A549 (cell line): ENCODE measurements at regions of chr1 and their contacts with region 1.

Region 1: GRCh38 chr1:181142096-181142958 is 53.8 kb downstream of the IER5 start:
- DNase-seq: peak; percentile 81 to 92
- ATAC-seq: peak; percentile 89 to 96
- H3K4me3 ChIP-seq: peak overlapping the region; percentile 19
- H3K27ac ChIP-seq: peak overlapping the region; percentile 77 to 92
- H3K4me1 ChIP-seq: peaks cover 36% of the 10 kb centered on the region
- CTCF ChIP-seq: peak; percentile 96
- EP300 ChIP-seq: no peak
- POLR2A ChIP-seq: no peak
- RAD21 ChIP-seq: peak; percentile 100

Region 2: GRCh38 chr1:180515864-180516388 is 626.4 kb before region 1 on chr1:
- CTCF ChIA-PET with region 1: interaction called, 16 read pairs
- POLR2A ChIA-PET with region 1: no interaction called
- DNase-seq: peak; percentile 84
- ATAC-seq: peak; percentile 97 to 100
- H3K4me3 ChIP-seq: no peak overlapping the region
- H3K27ac ChIP-seq: peak overlapping the region; percentile 74 to 75
- H3K4me1 ChIP-seq: peaks cover 12% of the 10 kb centered on the region
- CTCF ChIP-seq: peak; percentile 95
- EP300 ChIP-seq: no peak
- POLR2A ChIP-seq: no peak
- RAD21 ChIP-seq: peak; percentile 97 to 98

Region 3: DNA sequence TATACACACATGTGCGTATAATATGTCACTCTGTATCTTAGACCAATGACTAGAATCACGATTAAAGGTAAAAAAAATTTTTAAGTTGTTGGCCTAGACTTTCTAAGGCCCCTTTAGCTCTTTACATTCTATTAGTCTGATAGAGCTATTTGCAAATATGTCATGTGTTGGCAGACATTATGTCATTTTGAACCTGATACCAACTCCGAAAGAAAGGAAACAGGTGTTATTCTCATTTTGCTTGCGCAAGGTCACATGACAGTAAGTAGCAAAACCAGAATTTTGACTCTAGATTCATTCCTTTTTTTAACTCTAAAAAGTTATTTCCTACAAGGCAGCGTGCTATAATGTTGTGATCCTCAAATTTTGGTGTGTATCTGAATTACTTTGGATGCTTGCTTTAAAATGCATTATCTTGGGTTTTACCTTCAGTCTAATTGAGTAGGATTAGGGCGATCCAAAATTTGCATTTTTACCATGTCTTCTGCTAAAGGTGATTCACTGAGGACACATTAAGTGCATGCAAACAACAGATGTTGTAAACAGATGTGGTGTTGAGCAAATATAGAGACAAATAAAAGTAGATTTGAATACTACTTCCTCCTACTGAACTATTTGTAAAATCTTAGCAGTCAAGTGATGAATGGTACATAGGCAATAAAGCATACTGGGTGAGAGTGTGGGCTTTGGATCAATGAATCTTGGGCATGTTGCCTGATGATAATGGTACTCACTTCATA is 293.1 kb before region 1 on chr1:
- CTCF ChIA-PET with region 1: no interaction called
- POLR2A ChIA-PET with region 1: no interaction called
- DNase-seq: no peak
- ATAC-seq: no peak
- H3K4me3 ChIP-seq: no peak overlapping the region
- H3K27ac ChIP-seq: no peak overlapping the region
- H3K4me1 ChIP-seq: no peaks in the 10 kb centered on the region
- CTCF ChIP-seq: no peak
- EP300 ChIP-seq: no peak
- POLR2A ChIP-seq: no peak
- RAD21 ChIP-seq: no peak

Region 4: DNA sequence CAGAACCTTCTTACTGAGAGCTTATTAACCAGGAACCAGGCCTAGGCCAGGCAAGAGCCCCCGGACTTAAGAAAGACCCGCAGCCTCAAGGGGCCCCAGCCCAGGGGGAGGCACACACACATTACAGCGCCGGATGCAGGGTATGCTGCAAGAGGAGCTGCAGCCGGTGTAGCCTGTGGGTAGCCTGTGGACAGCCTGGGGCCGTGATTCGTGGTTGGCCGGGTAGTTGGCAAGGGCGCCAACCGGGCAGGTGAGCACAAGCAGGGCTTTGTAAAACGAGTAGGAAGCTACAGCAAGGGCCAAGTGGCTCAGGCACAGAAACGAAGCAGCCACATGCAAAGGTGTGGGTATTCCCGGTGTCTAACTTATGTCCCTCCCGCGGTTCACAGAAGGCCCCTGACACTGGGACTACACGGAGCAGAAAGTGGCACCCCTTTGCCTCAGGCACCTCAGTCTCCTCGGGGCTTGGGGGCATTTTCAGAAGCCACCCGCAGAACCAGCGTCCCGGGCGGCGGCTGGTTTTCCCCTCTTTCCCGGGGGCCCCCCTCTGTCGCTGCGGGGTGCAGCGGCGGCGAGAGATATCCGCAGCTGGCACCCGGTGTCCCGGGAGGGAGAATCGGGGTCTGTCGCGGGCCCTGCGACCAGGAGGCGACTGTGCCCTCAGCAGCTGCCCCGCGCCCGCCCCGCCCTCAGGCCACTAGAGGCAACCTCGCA is 188.9 kb before region 1 on chr1:
- CTCF ChIA-PET with region 1: interaction called, 17 read pairs
- POLR2A ChIA-PET with region 1: no interaction called
- DNase-seq: peak in 1 of 2 experiments; percentile 15
- ATAC-seq: peak; percentile 2 to 8; a peak in 5 of 6 replicates
- H3K4me3 ChIP-seq: peak overlapping the region; percentile 67
- H3K27ac ChIP-seq: peak overlapping the region; percentile 87 to 96
- H3K4me1 ChIP-seq: peaks cover 8% of the 10 kb centered on the region; the same call in 2 of the 3 replicates
- CTCF ChIP-seq: no peak
- EP300 ChIP-seq: no peak
- POLR2A ChIP-seq: no peak
- RAD21 ChIP-seq: no peak

Region 5: DNA sequence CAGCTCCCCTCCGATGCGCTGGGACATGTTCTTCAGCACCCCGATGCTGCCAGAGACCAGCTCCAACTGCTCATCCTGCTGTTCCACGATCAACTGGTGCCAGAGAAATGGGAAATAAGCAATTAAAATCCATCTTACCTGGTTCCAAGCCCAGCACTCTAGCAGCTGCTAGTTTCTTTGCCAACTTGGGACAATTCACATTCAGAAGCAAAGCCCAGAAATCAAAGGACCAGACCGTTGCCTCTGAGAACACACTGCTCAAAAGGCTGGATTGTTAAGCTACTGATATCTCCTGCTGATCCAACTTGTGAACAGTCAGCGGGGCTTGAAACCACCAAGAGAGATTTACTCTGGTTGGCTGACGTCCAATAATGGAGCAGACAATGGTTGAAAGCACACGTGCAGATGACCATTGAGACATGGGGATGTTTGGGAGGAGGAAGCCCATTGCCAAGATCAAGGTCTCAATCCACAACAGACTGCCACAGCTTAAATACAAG is 154.0 kb before region 1 on chr1:
- CTCF ChIA-PET with region 1: interaction called, 18 read pairs
- POLR2A ChIA-PET with region 1: no interaction called
- DNase-seq: no peak
- ATAC-seq: no peak
- H3K4me3 ChIP-seq: no peak overlapping the region
- H3K27ac ChIP-seq: no peak overlapping the region
- H3K4me1 ChIP-seq: no peaks in the 10 kb centered on the region
- CTCF ChIP-seq: no peak
- EP300 ChIP-seq: no peak
- POLR2A ChIP-seq: no peak
- RAD21 ChIP-seq: no peak

Region 6: DNA sequence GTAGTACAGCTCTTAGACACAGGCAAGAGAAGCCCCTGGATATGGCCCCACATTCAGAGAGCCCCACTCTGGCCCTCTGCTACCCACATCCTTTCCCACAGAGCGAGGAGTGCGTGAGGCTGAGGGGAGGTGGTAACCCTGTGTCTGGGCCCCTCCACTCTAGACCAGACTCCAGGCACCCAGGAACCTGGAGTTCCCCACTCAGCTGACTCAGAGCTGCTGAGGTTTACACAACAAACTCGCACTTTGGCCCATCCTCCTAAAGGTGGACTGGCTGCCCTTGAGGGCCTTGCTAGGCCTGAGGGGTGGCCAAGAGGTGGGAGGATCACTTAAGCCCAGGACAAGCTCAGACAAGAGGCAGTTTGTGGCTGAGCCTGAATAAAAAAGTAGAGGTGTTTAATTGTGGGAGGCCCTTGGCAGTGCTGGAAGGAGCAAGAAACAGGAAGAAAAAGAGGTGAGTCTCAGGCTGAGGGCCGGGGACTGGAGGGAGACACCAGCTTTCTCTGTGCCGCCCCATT is 97.8 kb before region 1 on chr1:
- CTCF ChIA-PET with region 1: interaction called, 55 read pairs
- POLR2A ChIA-PET with region 1: interaction called, 3 read pairs
- DNase-seq: peak; percentile 59 to 66
- ATAC-seq: peak; percentile 91 to 92
- H3K4me3 ChIP-seq: no peak overlapping the region
- H3K27ac ChIP-seq: peak overlapping the region; percentile 48 to 79
- H3K4me1 ChIP-seq: peaks cover 28% of the 10 kb centered on the region
- CTCF ChIP-seq: no peak
- EP300 ChIP-seq: no peak
- POLR2A ChIP-seq: no peak
- RAD21 ChIP-seq: no peak

Region 7: DNA sequence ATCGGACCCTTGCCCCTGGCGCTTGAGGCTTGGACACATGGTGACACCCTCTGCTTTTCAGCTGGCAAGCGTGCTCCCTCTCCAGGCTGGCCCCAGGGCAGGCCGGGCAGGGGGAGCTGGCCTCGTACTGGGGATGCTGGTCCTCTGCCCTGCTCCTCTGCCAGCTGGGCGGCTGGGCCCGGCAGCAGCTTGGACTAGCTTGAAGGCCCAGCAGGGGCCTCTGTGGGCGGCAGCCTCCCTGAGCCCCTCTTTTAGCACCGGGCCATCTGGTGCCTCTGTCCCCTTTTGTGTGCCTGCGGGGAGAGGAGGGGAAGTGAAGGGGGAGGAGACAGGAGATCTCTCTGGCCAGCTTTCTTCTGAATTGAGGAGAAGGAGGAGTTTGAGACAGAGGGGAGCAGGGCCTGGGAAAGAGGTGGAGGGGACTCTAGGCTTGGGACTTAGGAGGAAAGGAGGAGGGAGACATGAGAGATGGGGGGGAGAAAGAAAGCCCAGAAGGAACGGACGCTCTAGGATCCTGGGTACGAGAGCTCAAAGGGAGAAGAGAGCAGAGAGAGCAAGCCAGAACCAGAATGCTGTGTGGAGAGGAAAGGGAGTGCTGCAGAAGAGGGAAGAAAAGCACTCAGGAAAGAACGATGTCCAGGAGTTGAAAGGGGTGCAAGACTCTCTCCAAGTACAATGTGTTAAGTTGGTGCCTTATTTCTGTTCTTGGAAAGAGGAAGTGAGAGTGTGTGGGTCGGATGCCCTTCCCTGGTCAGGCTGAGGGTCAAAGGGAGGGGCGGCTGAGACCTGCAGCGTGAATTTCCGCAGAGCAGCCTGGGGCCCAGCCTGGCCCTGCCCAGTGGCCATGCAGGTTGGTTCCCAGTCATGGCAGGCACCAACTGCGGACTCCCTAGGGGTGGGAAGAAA is 13.5 kb before region 1 on chr1:
- CTCF ChIA-PET with region 1: interaction called, 774 read pairs
- POLR2A ChIA-PET with region 1: interaction called, 4 read pairs
- DNase-seq: no peak
- ATAC-seq: peak in 1 of 2 experiments; percentile 7; a peak in 2 of 6 replicates
- H3K4me3 ChIP-seq: no peak overlapping the region
- H3K27ac ChIP-seq: peak overlapping the region; percentile 73 to 90
- H3K4me1 ChIP-seq: peaks cover 76% of the 10 kb centered on the region
- CTCF ChIP-seq: no peak
- EP300 ChIP-seq: no peak
- POLR2A ChIP-seq: no peak
- RAD21 ChIP-seq: no peak

Region 8: DNA sequence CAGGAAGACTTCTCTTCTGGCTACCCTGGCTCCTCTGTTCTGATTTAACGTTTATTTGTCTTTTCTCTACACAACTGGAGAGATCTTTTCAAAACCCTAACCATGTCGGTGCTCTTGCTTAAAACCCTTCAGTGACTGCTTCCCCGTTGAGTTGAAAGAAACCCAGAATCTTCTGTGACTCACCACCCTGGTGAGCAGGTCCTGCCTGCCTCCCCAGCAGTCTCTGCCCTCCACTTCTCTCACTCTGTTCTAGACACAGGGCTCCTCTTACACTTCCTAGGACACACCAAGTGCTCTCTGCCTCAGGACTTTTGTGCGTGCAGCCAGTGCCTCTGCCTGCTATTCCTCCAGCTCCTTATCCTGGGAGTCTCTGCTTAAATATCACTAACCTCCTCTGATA is 77.6 kb after region 1 on chr1:
- CTCF ChIA-PET with region 1: no interaction called
- POLR2A ChIA-PET with region 1: no interaction called
- DNase-seq: no peak
- ATAC-seq: no peak
- H3K4me3 ChIP-seq: no peak overlapping the region
- H3K27ac ChIP-seq: no peak overlapping the region
- H3K4me1 ChIP-seq: no peaks in the 10 kb centered on the region
- CTCF ChIP-seq: no peak
- EP300 ChIP-seq: no peak
- POLR2A ChIP-seq: no peak
- RAD21 ChIP-seq: no peak